ENCODE measurements at regions of chr20 and their contacts with region 1.

Region 1: DNA sequence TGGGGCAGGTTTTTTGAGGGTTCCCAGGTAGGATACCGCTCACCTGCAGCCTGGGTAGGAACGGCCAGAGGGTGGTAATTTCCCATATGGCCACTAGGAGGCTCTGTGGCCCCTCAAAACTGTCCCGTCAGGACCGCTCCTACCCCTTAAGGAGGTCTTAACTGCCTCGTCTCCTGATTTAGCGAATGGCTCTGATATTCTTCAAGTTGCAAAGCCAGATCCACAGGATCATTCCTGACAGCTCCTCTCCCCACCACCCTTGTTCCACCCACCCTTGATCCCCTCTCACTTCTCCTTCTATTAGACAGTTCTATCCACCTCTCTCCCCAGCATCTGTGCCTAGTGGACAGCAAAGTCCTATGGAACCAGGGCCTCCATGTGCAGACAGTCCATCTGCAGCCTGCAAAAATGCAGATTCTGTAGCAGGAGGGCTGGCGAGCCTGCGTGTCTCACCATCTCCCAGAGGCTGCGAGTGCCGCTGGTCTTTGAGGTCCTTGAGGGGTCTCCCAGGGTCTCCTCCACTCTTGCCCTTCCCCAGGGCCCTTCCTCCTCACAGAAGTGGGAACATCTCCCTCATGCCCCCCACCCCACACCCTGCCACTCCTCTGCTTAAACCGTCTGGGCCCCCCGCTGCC is 34.3 kb upstream of the ZBP1 start:
- DNase-seq: peak in 1 of 2 donors; percentile 68
- H3K4me3 ChIP-seq: no peak overlapping the region
- H3K27ac ChIP-seq: peak overlapping the region; percentile 13 to 40
- H3K4me1 ChIP-seq: peaks cover 0 to 19% of the 10 kb centered on the region in 2 donors
- H3K27me3 ChIP-seq: no peaks in the 10 kb centered on the region
- CTCF ChIP-seq: peak; percentile 81 to 92 (median 89)

Region 2: DNA sequence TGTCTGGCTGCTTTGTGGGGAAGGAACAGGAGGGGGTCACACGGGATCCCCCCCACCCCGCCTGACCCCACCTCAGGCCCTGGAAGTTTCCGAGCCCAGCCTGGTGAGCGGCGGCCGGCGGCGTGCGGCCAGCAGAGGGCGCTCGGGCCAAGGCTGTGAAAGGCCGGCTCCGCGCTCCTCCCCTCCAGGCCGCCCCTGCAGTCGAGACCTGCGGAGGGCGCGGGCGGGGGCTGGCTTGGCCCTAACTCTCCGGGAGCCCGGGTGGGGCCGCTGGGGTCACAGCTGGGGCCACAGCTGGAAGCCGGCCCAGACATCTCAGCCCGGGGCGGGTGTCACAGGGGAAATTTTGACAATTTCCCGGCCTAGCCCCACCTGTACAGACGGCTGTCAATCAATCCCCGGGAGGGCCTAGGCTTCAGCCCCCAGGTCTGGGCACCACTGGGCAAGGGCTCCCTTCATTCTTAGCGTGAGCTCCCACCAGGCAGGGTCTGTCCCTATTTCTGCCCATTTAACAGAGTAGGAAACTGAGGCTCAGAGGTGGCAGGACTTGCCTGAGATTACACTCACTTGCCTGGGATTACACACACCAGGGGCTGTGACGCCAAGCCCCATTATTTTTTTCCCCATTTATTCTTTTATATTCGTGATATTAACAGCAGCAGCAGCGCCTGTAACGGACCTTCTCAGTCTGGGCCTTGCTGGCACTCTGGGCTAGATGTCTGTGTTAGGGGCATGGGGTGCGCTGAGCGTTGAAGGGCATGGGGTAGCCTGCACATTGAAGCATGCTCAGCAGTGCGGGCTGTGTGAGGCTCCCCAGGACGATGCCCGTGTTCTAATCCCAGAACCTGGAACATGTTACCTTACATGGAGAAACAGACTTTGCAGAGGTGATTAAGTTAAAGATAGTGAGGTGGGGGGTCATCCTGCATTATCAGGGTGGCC is 57.2 kb before region 1 on chr20:
- intact Hi-C with region 1: loop called (anchors 5 kb)
- DNase-seq: peak in 1 of 2 donors; percentile 82
- H3K4me3 ChIP-seq: peak overlapping the region in 1 of 2 donors; percentile 25
- H3K27ac ChIP-seq: no peak overlapping the region
- H3K4me1 ChIP-seq: peaks cover 2 to 4% of the 10 kb centered on the region in 2 donors
- H3K27me3 ChIP-seq: no peaks in the 10 kb centered on the region
- CTCF ChIP-seq: peak; percentile 90 to 99 (median 96)

Region 3: DNA sequence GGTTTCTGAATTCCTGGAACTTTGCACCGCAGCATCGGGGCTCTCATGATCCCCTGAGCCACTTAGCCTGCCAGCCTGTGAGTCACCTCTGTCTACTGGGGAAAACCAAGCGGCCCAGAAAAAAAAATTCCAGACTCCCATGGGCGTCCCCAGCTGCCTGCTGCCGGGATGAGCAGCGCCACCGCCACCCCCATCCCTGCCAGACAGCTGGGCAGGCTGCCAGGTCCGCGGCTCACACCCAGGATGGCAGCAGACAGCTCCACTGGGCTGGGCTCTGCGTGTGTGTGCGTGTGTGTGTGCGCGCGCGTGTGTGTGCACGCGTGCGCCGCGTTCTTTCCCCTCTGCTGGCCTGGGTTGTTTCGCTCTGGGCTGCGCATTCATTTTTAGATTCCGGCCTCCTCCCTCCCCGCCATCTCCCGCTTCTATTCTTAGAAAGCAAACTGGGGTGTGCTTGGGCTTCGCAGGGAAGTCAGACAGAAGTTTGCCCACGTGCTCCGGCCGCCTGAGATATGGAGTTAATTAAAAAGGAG is 94.2 kb after region 1 on chr20:
- intact Hi-C with region 1: loop called (anchors 2 kb)
- DNase-seq: peak; percentile 85 to 94
- H3K4me3 ChIP-seq: peak overlapping the region; percentile 39 to 50
- H3K27ac ChIP-seq: peak overlapping the region; percentile 94 to 99
- H3K4me1 ChIP-seq: peaks cover 6 to 25% of the 10 kb centered on the region in 2 donors
- H3K27me3 ChIP-seq: no peaks in the 10 kb centered on the region
- CTCF ChIP-seq: no peak

Region 4: DNA sequence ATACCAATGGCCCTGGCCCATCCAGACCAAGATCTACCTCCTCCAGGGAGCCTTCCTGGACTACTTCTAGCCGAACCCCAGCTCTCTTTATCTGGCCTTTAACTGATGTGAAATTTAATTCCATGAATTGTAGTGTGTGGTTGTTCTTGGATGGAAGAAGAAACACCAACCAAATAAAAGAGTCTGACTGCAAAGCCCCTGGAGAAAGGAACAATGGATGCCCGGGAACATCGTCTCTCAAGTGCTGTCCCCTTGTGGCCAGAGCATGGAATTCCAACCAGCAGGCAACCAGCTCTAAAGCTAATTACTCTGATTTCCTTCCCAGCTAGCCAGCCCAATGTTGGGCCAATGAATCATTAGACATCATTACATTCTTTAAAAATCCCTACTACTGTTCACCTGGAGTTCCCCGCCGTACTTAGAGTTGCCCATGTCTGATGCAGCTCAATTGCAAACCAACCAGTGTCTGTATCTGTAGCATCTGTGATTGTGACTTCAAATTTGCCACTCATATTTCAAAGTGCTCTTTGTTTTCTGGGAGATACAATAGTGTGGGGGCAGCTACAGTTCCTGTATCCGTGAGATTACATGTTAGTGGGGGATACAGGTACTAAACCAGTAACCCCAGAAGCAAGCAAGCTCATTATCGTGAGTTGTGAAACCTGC is 432.8 kb after region 1 on chr20:
- intact Hi-C with region 1: loop called (anchors 2 kb)
- DNase-seq: peak in 1 of 2 donors; percentile 52
- H3K4me3 ChIP-seq: no peak overlapping the region
- H3K27ac ChIP-seq: no peak overlapping the region
- H3K4me1 ChIP-seq: no peaks in the 10 kb centered on the region
- H3K27me3 ChIP-seq: no peaks in the 10 kb centered on the region
- CTCF ChIP-seq: peak; percentile 75 to 85 (median 75)

Measured in ascending aorta (tissue), 2 donors.